ENCODE measurements at regions of chrX and their contacts with region 1.

Region 1: GRCh38 chrX:123732670-123733363 is at the start of gene THOC2:
- DNase-seq: peak; percentile 84
- ATAC-seq: peak; percentile 87
- H3K4me3 ChIP-seq: peak within 1 kb of the TSS; percentile 97
- H3K27ac ChIP-seq: peak within 1 kb of the TSS; percentile 72
- H3K4me1 ChIP-seq: peaks cover 32% of the 10 kb centered on the region
- H3K27me3 ChIP-seq: no peaks in the 10 kb centered on the region
- CTCF ChIP-seq: peak; percentile 30; the same call in 1 of the 2 replicates
- total RNA-seq, gene THOC2: 69.1 and 78.0 TPM in 2 replicates

Region 2: DNA sequence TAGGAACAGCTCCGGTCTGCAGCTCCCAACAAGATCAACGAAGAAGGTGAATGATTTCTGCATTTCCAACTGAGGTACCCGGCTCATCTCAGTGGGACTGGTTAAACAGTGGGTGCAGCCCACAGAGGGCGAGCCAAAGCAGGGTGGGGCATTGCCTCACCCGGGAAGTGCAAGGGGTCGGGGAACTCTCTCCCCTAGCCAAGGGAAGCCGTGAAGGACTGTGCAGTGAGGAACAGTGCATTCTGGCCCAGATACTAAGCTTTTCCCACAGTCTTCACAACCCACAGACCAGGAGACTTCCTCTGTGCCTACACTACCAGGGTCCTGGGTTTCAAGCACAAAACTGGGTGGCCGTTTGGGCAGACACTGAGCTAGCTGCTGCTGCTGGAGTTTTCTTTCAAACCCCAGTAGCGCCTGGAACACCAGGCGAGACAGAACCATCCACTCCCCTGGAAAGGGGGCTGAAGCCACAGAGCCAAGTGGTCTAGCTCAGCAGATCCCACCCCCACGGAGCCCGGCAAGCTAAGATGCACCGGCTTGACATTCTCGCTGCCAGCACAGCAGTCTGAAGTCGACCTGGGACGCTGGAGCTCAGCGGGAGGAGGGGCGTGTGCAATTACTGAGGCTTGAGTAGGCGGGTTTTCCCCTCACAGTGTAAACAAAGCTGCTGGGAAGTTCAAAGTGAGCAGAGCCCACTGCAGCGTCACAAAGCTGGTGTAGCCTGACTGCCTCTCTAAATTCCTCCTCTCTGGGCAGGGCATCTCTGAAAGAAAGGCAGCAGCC is 84.6 kb before region 1 on chrX:
- CTCF ChIA-PET with region 1: no interaction called
- POLR2A ChIA-PET with region 1: no interaction called
- intact Hi-C with region 1: loop called (anchors 5 kb)
- DNase-seq: peak; percentile 37
- ATAC-seq: peak; percentile 96
- H3K4me3 ChIP-seq: no peak overlapping the region
- H3K27ac ChIP-seq: no peak overlapping the region
- H3K4me1 ChIP-seq: peaks cover 4% of the 10 kb centered on the region; the same call in 1 of the 2 replicates
- H3K27me3 ChIP-seq: no peaks in the 10 kb centered on the region
- CTCF ChIP-seq: no peak

Region 3: DNA sequence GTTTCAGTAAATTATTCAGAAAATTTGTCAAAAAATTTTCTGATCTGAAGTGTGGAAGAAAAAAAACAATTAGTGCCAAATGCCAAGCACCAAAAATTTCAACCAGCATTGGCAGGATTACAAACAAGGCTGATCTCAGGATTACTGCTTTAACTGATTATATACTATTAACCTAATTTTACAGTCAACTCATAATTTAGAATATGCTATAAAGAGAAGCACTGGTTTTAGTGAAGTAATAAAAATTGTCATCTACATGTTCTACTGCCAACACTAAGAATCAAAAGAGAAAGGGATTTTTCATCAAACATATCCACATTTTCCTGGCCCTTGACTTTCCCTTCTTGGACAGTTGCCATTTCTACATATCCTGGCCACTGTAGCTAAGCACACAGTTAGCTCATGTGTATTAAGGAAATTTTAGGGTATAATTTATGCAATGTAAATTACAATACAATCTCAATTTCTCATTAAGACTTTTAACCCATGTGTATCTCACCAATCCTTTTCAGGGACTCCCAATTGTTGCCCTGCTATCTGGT is 33.8 kb before region 1 on chrX:
- CTCF ChIA-PET with region 1: no interaction called
- POLR2A ChIA-PET with region 1: no interaction called
- intact Hi-C with region 1: loop called (anchors 5 kb)
- DNase-seq: no peak
- ATAC-seq: 0 out of 2 replicates have a peak, but pooled peaks have one; percentile 16
- H3K4me3 ChIP-seq: no peak overlapping the region
- H3K27ac ChIP-seq: no peak overlapping the region
- H3K4me1 ChIP-seq: peaks cover 25% of the 10 kb centered on the region
- H3K27me3 ChIP-seq: no peaks in the 10 kb centered on the region
- CTCF ChIP-seq: no peak

Measured in PC-3 (cell line).